ENCODE measurements at regions of chr4 and their contacts with region 1.

Region 1: GRCh38 chr4:147096667-147097604 is 151.3 kb upstream of the TTC29 start:
- DNase-seq: no peak
- ATAC-seq: peak; percentile 61

Region 2: DNA sequence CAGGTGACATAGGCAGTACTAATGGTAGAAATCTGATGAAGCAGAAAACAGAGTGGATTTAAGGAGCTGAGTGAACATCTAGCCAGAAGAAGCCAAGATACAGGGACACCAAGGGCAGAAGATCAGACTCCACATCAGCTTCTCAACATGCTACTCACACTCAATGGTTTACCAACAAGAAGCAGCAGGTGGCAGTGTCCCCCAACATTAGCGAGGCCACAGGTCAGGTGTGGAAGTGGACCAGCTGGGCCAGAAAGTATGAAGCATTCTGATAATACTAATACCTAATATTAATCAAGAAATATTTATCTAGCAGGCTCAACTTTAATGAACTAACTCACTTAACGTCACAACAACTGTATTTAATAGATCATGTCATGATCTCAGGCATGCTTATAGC is 77.9 kb before region 1 on chr4:
- intact Hi-C with region 1: loop called (anchors 2 kb)
- DNase-seq: peak; percentile 77
- ATAC-seq: peak; percentile 87

Measured in left ventricle myocardium superior (tissue), 1 donor.